CD14-positive monocyte (primary cell): ENCODE measurements at regions of chr2 and their contacts with region 1.

Region 1: GRCh38 chr2:45643543-45644542 is 7.6 kb upstream of the PRKCE start:
- DNase-seq: peak; percentile 64 to 72 (median 71)
- H3K4me3 ChIP-seq: peak overlapping the region; percentile 27 to 73 (median 40)
- H3K4me3 Mint-ChIP-seq: peak overlapping the region; percentile 79 to 86
- H3K27ac ChIP-seq: no peak overlapping the region
- H3K27ac Mint-ChIP-seq: peak overlapping the region in 3 of 7 donors; percentile 54 to 89 (median 56)
- H3K4me1 ChIP-seq: peaks cover 10 to 12% of the 10 kb centered on the region in 2 donors
- H3K4me1 Mint-ChIP-seq: peaks cover 16% of the 10 kb centered on the region
- H3K27me3 ChIP-seq: peaks cover 0 to 16% of the 10 kb centered on the region in 2 donors
- H3K27me3 Mint-ChIP-seq: peaks cover 18 to 27% (median 18%) of the 10 kb centered on the region in 3 donors
- CTCF ChIP-seq: peak; percentile 93

Region 2: DNA sequence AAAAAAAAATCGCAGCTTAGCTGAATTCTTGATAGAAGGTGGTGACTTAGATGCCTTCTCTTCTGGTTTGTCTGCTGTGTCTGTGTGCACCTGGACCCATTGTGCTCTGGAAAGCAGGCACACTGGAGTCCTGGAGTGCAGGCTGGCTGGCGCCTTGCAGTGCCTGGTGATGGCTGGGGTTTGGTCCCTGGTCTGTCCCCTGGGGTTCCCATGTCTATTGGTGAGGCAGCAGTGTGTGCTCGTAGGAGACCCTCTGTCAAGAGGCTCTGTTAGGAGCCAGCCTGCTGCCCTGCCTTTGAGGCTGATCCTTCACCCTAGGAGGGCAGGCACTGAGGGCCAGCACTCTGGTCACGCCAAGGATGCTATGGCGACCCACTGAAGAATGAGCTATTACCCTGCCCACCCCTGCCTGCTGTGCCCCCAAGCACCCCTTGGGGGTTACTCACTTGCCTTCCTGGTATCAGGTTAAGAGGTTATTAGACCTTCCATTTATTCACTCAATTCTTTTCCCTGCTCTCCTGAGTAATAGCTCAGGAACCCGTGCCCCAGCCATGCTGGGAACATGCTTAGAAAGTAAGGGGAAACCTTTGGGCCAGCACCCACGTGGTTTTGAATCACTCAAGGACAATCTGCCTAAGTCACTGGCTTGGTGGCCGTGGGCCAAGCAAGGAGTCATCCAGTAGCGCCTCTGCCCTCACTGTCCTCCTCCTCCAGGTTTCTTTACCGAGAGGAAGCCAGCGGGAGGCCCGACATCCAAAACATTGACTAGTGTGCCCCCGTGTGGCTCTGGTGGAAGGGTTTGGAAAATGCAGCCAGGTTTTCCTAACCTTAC is 292.2 kb after region 1 on chr2:
- intact Hi-C with region 1: loop called (anchors 2 kb)
- DNase-seq: peak; percentile 90 to 97 (median 96)
- H3K4me3 ChIP-seq: no peak overlapping the region
- H3K4me3 Mint-ChIP-seq: peak overlapping the region in 1 of 2 donors; percentile 48
- H3K27ac ChIP-seq: no peak overlapping the region
- H3K27ac Mint-ChIP-seq: peak overlapping the region in 6 of 7 donors; percentile 30 to 84 (median 70)
- H3K4me1 ChIP-seq: peaks cover 6% of the 10 kb centered on the region in 2 donors
- H3K4me1 Mint-ChIP-seq: peaks cover 10% of the 10 kb centered on the region
- H3K27me3 ChIP-seq: no peaks in the 10 kb centered on the region
- H3K27me3 Mint-ChIP-seq: no peaks in the 10 kb centered on the region
- CTCF ChIP-seq: peak; percentile 79